Heart left ventricle (tissue), 16 donors: ENCODE measurements at regions of chr21 and their contacts with region 1.

Region 1: DNA sequence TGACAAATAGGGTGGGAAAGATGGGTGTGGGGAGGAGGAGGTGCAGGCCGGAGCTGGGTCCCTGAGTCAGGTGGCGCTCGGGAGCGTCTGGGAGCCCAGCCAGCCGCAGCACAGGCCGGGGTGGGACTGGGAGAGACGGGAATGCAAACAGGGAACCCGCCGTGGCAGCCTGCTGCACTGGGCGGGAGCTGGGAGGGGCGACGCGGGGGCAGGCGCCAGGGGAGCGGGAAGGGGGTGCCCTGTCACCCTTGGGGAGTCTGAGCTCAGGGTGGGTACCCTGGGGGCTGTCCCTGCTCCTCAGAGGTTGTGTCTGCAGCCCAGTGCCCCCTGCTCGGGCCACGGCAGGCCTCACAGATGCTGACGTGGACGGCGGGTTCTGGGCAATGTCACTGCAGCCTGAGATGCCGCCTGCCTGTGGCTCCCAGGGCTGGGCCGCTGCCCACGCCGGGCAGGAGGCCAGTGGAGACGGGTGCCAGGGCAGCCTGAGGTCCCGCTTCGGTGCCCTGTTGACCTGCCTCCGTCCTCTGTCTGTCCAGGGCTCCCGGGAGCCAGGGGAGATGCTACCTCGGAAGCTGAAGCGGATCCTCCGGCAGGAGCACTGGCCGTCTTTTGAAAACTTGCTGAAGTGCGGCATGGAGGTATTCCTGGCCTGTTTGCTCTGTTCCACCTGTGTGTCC is 16.6 kb upstream of the LRRC3 start:
- DNase-seq: peak; percentile 77 to 89 (median 84)
- ATAC-seq: peak; percentile 91 to 95 (median 92)
- H3K4me3 ChIP-seq: peak overlapping the region in 6 of 12 donors; percentile 14 to 40 (median 30)
- H3K27ac ChIP-seq: peak overlapping the region; percentile 0 to 92 (median 82)
- H3K4me1 ChIP-seq: peaks cover 0 to 17% (median 2%) of the 10 kb centered on the region in 12 donors
- H3K27me3 ChIP-seq: no peaks in the 10 kb centered on the region
- CTCF ChIP-seq: no peak
- POLR2A ChIP-seq: no peak

Region 2: DNA sequence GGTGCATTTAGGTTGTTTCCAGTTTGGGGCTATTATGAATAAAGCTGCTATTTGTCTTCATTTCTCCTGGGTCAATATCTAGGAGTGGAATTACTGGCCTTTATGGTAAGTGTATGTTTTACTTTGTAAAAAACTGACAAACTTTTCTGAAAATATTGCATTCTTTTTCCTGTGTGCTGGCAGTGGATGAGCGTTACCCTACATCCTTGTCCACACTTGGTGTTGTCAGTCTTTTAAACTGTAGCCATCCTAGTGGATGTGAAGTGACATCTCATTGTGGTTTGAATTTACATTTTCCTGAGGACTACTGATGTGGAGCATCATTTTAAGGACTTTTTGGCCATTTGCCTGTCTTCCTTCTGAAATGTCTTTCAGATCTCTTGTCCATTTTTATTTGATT is 49.3 kb before region 1 on chr21:
- intact Hi-C with region 1: loop called in 1 of 10 experiments (anchors 5 kb)
- DNase-seq: no peak
- ATAC-seq: no peak
- H3K4me3 ChIP-seq: no peak overlapping the region
- H3K27ac ChIP-seq: no peak overlapping the region
- H3K4me1 ChIP-seq: peaks cover 0 to 4% (median 0%) of the 10 kb centered on the region in 12 donors
- H3K27me3 ChIP-seq: peaks cover 0 to 17% (median 0%) of the 10 kb centered on the region in 9 donors
- CTCF ChIP-seq: no peak
- POLR2A ChIP-seq: no peak